CD4-positive, alpha-beta memory T cell (primary cell): ENCODE measurements at regions of chr5 and their contacts with region 1.

Region 1: GRCh38 chr5:96687812-96688453 is 25.8 kb downstream of the CAST start:
- DNase-seq: peak; percentile 27 to 39 (median 33)
- H3K4me3 ChIP-seq: no peak overlapping the region
- H3K4me3 Mint-ChIP-seq: peak overlapping the region in 1 of 8 donors; percentile 70
- H3K27ac ChIP-seq: no peak overlapping the region
- H3K27ac Mint-ChIP-seq: peak overlapping the region in 4 of 7 donors; percentile 4 to 46 (median 30)
- H3K4me1 ChIP-seq: peaks cover 17% of the 10 kb centered on the region
- H3K4me1 Mint-ChIP-seq: peaks cover 22 to 55% (median 32%) of the 10 kb centered on the region in 4 donors
- H3K27me3 ChIP-seq: no peaks in the 10 kb centered on the region
- H3K27me3 Mint-ChIP-seq: no peaks in the 10 kb centered on the region

Region 2: GRCh38 chr5:96619946-96620345 is 68.0 kb before region 1 on chr5:
- CTCF ChIA-PET with region 1: interaction called, 74 read pairs
- POLR2A ChIA-PET with region 1: no interaction called
- intact Hi-C with region 1: no loop called
- DNase-seq: no peak
- H3K4me3 ChIP-seq: no peak overlapping the region
- H3K4me3 Mint-ChIP-seq: no peak overlapping the region
- H3K27ac ChIP-seq: no peak overlapping the region
- H3K27ac Mint-ChIP-seq: no peak overlapping the region
- H3K4me1 ChIP-seq: no peaks in the 10 kb centered on the region
- H3K4me1 Mint-ChIP-seq: peaks cover 0 to 2% (median 0%) of the 10 kb centered on the region in 4 donors
- H3K27me3 ChIP-seq: no peaks in the 10 kb centered on the region
- H3K27me3 Mint-ChIP-seq: peaks cover 0 to 1% of the 10 kb centered on the region in 2 donors

Region 3: DNA sequence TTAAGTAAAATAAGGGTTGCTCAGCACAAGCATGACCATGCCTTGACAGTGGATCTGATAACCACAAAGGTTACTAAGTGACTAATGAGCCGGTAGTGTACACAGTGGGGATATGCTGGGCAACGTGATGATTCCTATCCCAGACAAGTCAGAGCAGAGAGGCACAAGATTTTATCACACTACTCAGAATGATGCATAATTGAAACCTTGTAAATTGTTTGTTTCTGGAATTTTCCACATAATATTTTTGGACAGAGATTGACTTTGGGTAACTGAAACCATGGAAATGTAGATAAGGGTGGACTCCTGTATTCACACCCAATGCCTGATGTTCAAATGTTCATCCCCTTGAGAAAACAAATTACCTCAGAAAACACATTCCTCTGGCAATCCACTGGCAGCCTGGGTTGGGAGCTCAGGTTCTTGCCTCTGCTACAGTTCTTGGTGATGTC is 136.0 kb after region 1 on chr5:
- CTCF ChIA-PET with region 1: no interaction called
- POLR2A ChIA-PET with region 1: no interaction called
- intact Hi-C with region 1: no loop called
- DNase-seq: peak in 1 of 5 donors; percentile 35
- H3K4me3 ChIP-seq: no peak overlapping the region
- H3K4me3 Mint-ChIP-seq: peak overlapping the region in 1 of 8 donors; percentile 4
- H3K27ac ChIP-seq: no peak overlapping the region
- H3K27ac Mint-ChIP-seq: peak overlapping the region in 3 of 7 donors; percentile 14 to 83 (median 49)
- H3K4me1 ChIP-seq: peaks cover 28% of the 10 kb centered on the region
- H3K4me1 Mint-ChIP-seq: peaks cover 31 to 46% (median 38%) of the 10 kb centered on the region in 4 donors
- H3K27me3 ChIP-seq: no peaks in the 10 kb centered on the region
- H3K27me3 Mint-ChIP-seq: peaks cover 0 to 2% of the 10 kb centered on the region in 2 donors